ENCODE measurements at regions of chr11 and their contacts with region 1.

Region 1: GRCh38 chr11:130124096-130124495 is 35.5 kb upstream of the ST14 start:
- DNase-seq: no peak
- ATAC-seq: no peak
- H3K4me3 Mint-ChIP-seq: no peak overlapping the region
- H3K27ac Mint-ChIP-seq: no peak overlapping the region
- H3K4me1 Mint-ChIP-seq: peaks cover 30% of the 10 kb centered on the region
- H3K27me3 Mint-ChIP-seq: peaks cover 5% of the 10 kb centered on the region
- CTCF ChIP-seq: no peak

Region 2: DNA sequence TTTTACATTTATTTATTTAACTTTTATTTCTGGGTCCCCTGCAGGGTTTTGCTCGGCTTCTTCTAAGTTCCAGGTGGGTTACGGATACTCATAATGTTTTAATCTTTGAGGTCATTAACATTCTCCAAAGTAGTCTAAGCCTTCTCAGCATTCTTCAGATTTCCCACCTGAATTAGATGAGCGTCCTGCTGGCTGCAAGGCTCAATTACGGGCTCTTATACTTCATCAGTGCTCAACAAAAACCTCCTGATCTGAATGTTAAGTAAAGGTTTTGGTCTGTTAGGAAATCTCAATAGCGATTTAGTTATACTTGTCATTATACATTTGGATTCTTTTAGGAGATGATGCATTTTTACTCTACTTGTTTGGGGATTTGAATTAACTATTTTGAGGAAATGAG is 201.4 kb before region 1 on chr11:
- CTCF ChIA-PET with region 1: interaction called, 10 read pairs
- POLR2A ChIA-PET with region 1: interaction called, 3 read pairs
- intact Hi-C with region 1: no loop called
- DNase-seq: no peak
- ATAC-seq: no peak
- H3K4me3 Mint-ChIP-seq: no peak overlapping the region
- H3K27ac Mint-ChIP-seq: no peak overlapping the region
- H3K4me1 Mint-ChIP-seq: peaks cover 6% of the 10 kb centered on the region
- H3K27me3 Mint-ChIP-seq: no peaks in the 10 kb centered on the region
- CTCF ChIP-seq: no peak

Region 3: GRCh38 chr11:130069684-130070108 is 54.4 kb before region 1 on chr11 and contains the start of gene APLP2:
- CTCF ChIA-PET with region 1: interaction called, 3 read pairs
- POLR2A ChIA-PET with region 1: no interaction called
- intact Hi-C with region 1: loop called (anchors 5 kb)
- DNase-seq: peak; percentile 99
- ATAC-seq: peak; percentile 97
- H3K4me3 Mint-ChIP-seq: peak within 1 kb of the TSS; percentile 85
- H3K27ac Mint-ChIP-seq: peak within 1 kb of the TSS; percentile 87
- H3K4me1 Mint-ChIP-seq: peaks cover 20% of the 10 kb centered on the region
- H3K27me3 Mint-ChIP-seq: peaks cover 9% of the 10 kb centered on the region
- CTCF ChIP-seq: no peak
- total RNA-seq, gene APLP2: 25.5 to 29.8 TPM

Region 4: DNA sequence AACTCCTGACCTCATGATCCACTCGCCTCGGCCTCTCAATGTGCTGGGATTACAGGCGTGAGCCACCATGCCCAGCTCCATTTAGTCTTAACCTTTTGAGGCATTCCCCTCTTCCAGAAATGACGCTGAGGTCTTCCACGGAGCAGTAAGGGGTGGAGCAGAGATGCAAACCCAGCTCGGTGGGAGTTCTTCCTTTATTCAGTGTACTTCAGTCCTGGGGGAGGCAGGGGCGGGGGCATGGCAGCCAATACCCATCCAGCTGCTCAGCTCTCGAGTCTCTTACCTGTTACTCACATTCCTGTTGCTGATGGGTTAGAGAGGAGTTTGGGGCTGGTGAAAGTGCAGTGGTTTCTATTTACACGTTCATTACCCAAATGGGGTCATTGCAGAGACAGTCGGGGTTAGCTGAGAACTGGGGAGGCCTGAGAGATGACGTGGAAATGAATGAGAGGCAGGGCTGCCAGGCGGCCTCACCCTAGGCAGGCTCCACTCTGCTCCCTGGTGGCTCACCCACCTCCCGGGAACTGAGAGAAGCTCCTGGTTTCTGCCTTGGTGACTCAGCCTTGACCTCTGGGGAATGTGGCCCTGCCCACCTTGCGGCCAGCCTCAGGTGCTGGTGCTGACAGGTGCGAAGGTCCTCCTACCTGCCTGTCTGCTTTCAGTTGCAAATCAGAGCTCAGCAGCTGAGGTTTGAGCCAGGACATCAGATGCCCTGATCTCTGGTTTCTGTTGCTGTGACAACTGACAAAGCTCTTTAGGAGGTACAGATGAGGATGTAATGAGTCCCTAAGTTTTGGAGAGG is 22.1 kb after region 1 on chr11:
- CTCF ChIA-PET with region 1: no interaction called
- POLR2A ChIA-PET with region 1: no interaction called
- intact Hi-C with region 1: no loop called
- DNase-seq: no peak
- ATAC-seq: peak; percentile 27
- H3K4me3 Mint-ChIP-seq: no peak overlapping the region
- H3K27ac Mint-ChIP-seq: no peak overlapping the region
- H3K4me1 Mint-ChIP-seq: peaks cover 6% of the 10 kb centered on the region
- H3K27me3 Mint-ChIP-seq: no peaks in the 10 kb centered on the region
- CTCF ChIP-seq: no peak

Region 5: GRCh38 chr11:130202009-130202817 is 78.1 kb after region 1 on chr11:
- CTCF ChIA-PET with region 1: no interaction called
- POLR2A ChIA-PET with region 1: no interaction called
- intact Hi-C with region 1: no loop called
- DNase-seq: no peak
- ATAC-seq: no peak
- H3K4me3 Mint-ChIP-seq: no peak overlapping the region
- H3K27ac Mint-ChIP-seq: no peak overlapping the region
- H3K4me1 Mint-ChIP-seq: no peaks in the 10 kb centered on the region
- H3K27me3 Mint-ChIP-seq: no peaks in the 10 kb centered on the region
- CTCF ChIP-seq: no peak